ENCODE measurements at regions of chr16 and their contacts with region 1.

Region 1: GRCh38 chr16:73956587-73957494 is 339.8 kb upstream of the PSMD7 start:
- DNase-seq: peak in 4 of 9 experiments; percentile 15 to 47 (median 20)
- ATAC-seq: no peak
- H3K4me3 ChIP-seq: no peak overlapping the region
- H3K4me3 Mint-ChIP-seq: no peak overlapping the region
- H3K27ac ChIP-seq: no peak overlapping the region
- H3K27ac Mint-ChIP-seq: no peak overlapping the region
- H3K4me1 ChIP-seq: no peaks in the 10 kb centered on the region
- H3K4me1 Mint-ChIP-seq: no peaks in the 10 kb centered on the region
- H3K27me3 ChIP-seq: no peaks in the 10 kb centered on the region
- H3K27me3 Mint-ChIP-seq: peaks cover 2% of the 10 kb centered on the region
- CTCF ChIP-seq: peak; percentile 61

Region 2: GRCh38 chr16:72400257-72400882 is 1556.5 kb before region 1 on chr16:
- CTCF ChIA-PET with region 1: no interaction called
- POLR2A ChIA-PET with region 1: no interaction called
- intact Hi-C with region 1: loop called in 1 of 2 experiments (anchors 5 kb)
- DNase-seq: peak in 5 of 9 experiments; percentile 1 to 45 (median 25)
- ATAC-seq: no peak
- H3K4me3 ChIP-seq: no peak overlapping the region
- H3K4me3 Mint-ChIP-seq: no peak overlapping the region
- H3K27ac ChIP-seq: no peak overlapping the region
- H3K27ac Mint-ChIP-seq: no peak overlapping the region
- H3K4me1 ChIP-seq: no peaks in the 10 kb centered on the region
- H3K4me1 Mint-ChIP-seq: no peaks in the 10 kb centered on the region
- H3K27me3 ChIP-seq: no peaks in the 10 kb centered on the region
- H3K27me3 Mint-ChIP-seq: no peaks in the 10 kb centered on the region
- CTCF ChIP-seq: peak; percentile 65

Region 3: GRCh38 chr16:73996624-73997339 is 39.9 kb after region 1 on chr16:
- CTCF ChIA-PET with region 1: no interaction called
- POLR2A ChIA-PET with region 1: no interaction called
- intact Hi-C with region 1: no loop called
- DNase-seq: no peak
- ATAC-seq: no peak
- H3K4me3 ChIP-seq: no peak overlapping the region
- H3K4me3 Mint-ChIP-seq: no peak overlapping the region
- H3K27ac ChIP-seq: no peak overlapping the region
- H3K27ac Mint-ChIP-seq: no peak overlapping the region
- H3K4me1 ChIP-seq: no peaks in the 10 kb centered on the region
- H3K4me1 Mint-ChIP-seq: no peaks in the 10 kb centered on the region
- H3K27me3 ChIP-seq: no peaks in the 10 kb centered on the region
- H3K27me3 Mint-ChIP-seq: no peaks in the 10 kb centered on the region
- CTCF ChIP-seq: no peak

Measured in CD8-positive, alpha-beta T cell (primary cell).